ENCODE measurements at regions of chr18 and their contacts with region 1.

Region 1: GRCh38 chr18:80108728-80109675 is at the start of gene ADNP2:
- DNase-seq: peak; percentile 92
- H3K4me3 Mint-ChIP-seq: peak within 1 kb of the TSS; percentile 79
- H3K27ac Mint-ChIP-seq: peak within 1 kb of the TSS; percentile 80
- H3K4me1 Mint-ChIP-seq: peaks cover 32% of the 10 kb centered on the region
- H3K27me3 Mint-ChIP-seq: no peaks in the 10 kb centered on the region
- total RNA-seq, gene ADNP2: 16.8 to 18.0 TPM

Region 2: DNA sequence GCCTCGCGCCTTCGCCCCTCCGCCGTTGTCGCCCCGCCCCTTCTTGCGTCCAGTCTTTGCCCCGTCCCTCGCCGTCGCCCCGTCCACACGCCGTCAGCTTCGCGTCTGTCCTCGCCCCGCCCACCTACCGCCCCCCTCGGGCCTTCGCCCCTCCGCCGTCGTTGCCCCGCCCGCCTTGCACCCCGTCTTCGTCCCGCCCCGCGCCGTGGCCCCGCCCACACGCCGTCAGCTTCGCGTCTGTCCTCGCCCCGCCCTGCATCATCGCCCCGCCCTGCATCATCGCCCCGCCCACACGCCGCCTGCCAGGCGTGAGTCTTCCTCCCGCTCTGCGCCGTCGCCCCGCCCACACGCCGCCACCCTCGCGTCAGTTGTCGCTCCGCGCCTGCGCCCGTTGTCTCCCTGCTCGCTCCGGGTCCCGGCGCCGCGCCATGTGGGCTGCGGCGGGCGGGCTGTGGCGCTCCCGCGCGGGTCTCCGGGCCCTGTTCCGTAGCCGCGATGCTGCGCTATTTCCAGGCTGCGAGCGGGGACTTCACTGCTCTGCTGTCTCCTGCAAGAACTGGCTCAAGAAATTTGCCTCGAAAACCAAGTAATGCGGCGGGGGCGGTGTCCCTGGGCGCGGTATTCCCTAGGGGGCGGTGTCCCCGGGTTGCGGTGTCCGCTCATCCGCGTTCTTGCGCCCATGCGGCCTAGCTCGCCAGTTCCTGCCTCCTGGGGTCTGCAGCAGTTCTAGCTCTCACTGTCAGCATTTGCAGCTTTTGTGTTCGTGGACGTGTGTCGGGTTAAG is 74.7 kb before region 1 on chr18 and contains the start of gene RBFA:
- CTCF ChIA-PET with region 1: interaction called, 4 read pairs
- intact Hi-C with region 1: loop called (anchors 1 kb)
- DNase-seq: peak; percentile 100
- H3K4me3 Mint-ChIP-seq: peak within 1 kb of the TSS; percentile 82
- H3K27ac Mint-ChIP-seq: peak within 1 kb of the TSS; percentile 73
- H3K4me1 Mint-ChIP-seq: peaks cover 26% of the 10 kb centered on the region
- H3K27me3 Mint-ChIP-seq: no peaks in the 10 kb centered on the region
- total RNA-seq, gene RBFA: 35.7 to 36.0 TPM

Region 3: GRCh38 chr18:80096032-80096565 is 12.9 kb before region 1 on chr18:
- CTCF ChIA-PET with region 1: no interaction called
- intact Hi-C with region 1: no loop called
- DNase-seq: no peak
- H3K4me3 Mint-ChIP-seq: no peak overlapping the region
- H3K27ac Mint-ChIP-seq: no peak overlapping the region
- H3K4me1 Mint-ChIP-seq: no peaks in the 10 kb centered on the region
- H3K27me3 Mint-ChIP-seq: peaks cover 2% of the 10 kb centered on the region